H1 (cell line): ENCODE measurements at regions of chr20 and their contacts with region 1.

Region 1: GRCh38 chr20:63641792-63642544 is 11.3 kb downstream of the STMN3 start:
- DNase-seq: peak in 1 of 2 experiments; percentile 97
- H3K4me3 ChIP-seq: peak overlapping the region; percentile 34 to 67 (median 49)
- H3K27ac ChIP-seq: peak overlapping the region; percentile 28; the same call in 1 of the 2 replicates
- H3K4me1 ChIP-seq: peaks cover 0 to 16% (median 1%) of the 10 kb centered on the region in 4 experiments; a peak in 3 of 7 replicates
- H3K27me3 ChIP-seq: no peaks in the 10 kb centered on the region; a peak in 1 of 7 replicates
- CTCF ChIP-seq: peak; percentile 40 to 63 (median 55)
- EP300 ChIP-seq: no peak
- POLR2A ChIP-seq: peak in 1 of 2 experiments; percentile 63; a peak in 1 of 3 replicates
- RAD21 ChIP-seq: peak; percentile 51 to 52

Region 2: DNA sequence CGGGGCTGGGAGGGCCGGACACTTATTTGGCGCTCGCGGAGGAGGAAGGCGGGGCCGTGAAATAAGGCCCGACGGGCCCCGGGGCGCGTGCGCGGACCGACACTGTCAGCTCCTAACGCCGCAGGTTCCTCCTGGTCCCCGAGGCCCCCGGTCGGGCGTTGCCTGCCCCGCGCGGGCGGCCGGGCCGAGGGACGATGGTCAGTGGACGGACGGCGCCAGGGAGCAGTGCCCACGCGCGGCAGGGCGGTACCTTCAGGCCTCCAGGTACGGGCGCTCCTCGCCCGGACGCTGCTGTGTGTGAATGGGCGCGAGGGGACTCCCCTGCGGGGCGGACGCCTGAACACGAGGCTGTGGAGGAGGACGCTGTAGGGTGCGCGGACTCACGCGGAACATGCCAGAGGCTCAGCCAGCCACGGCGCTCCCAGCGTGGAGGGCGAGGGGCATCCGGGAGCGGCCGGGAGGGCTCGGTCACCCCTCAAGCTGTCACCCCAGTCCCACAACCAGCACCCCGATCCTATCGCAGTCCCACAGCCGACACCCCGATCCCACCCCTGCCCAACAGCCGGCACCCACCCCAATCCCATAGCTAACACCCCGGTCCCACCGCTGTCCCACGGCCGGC is 14.7 kb before region 1 on chr20:
- CTCF ChIA-PET with region 1: interaction called, 28 read pairs
- POLR2A ChIA-PET with region 1: interaction called, 12 read pairs
- DNase-seq: peak; percentile 54 to 95
- H3K4me3 ChIP-seq: peak overlapping the region; percentile 75 to 99 (median 92)
- H3K27ac ChIP-seq: peak overlapping the region; percentile 68; the same call in 1 of the 2 replicates
- H3K4me1 ChIP-seq: peaks cover 0 to 3% (median under 1%) of the 10 kb centered on the region in 4 experiments; a peak in 3 of 7 replicates
- H3K27me3 ChIP-seq: no peaks in the 10 kb centered on the region
- CTCF ChIP-seq: no peak
- EP300 ChIP-seq: no peak
- POLR2A ChIP-seq: no peak
- RAD21 ChIP-seq: no peak

Region 3: GRCh38 chr20:63652168-63653077 is 10.5 kb after region 1 on chr20:
- CTCF ChIA-PET with region 1: interaction called, 11 read pairs
- POLR2A ChIA-PET with region 1: interaction called, 15 read pairs
- DNase-seq: peak in 1 of 2 experiments; percentile 82
- H3K4me3 ChIP-seq: peak overlapping the region; percentile 34 to 85 (median 49)
- H3K27ac ChIP-seq: no peak overlapping the region
- H3K4me1 ChIP-seq: peaks cover 0 to 17% (median 13%) of the 10 kb centered on the region in 4 experiments; a peak in 6 of 7 replicates
- H3K27me3 ChIP-seq: peaks cover 0 to 2% (median 0%) of the 10 kb centered on the region in 4 experiments; a peak in 2 of 7 replicates
- CTCF ChIP-seq: no peak
- EP300 ChIP-seq: no peak
- POLR2A ChIP-seq: no peak
- RAD21 ChIP-seq: no peak

Region 4: DNA sequence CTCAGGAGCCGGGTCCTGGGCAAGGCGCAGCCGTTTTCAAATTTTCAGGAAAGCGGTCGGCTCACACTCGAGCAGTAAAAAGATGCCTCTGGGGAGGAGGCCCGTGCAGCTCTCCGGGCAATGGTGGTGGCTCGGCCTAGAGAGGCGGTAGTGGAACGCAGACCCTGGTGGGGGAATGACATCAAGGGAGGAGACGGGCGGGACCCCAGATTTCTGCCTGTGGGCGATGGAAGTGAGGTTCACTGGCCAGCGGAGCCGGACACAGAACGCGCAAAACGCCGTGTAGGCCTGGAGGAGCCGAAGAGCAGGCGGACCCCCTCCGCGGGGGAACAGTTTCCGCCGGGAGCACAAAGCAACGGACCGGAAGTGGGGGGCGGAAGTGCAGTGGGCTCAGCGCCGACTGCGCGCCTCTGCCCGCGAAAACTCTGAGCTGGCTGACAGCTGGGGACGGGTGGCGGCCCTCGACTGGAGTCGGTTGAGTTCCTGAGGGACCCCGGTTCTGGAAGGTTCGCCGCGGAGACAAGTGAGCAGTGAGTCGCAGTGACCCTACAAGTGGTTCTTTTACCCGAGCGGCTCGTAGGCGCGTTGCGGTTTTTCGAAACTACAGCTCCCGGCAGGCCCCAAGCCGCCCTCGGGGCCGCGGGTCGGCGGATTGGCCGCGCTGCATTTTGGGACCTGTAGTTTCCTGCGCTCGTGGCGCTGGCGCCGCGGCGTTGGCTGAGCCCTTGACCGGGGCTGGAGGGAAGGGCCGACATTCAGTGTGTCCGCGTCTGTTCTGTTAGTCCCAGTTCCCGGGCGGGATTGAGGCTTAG is 16.2 kb after region 1 on chr20 and contains the start of gene RTEL1:
- CTCF ChIA-PET with region 1: interaction called, 6 read pairs
- POLR2A ChIA-PET with region 1: interaction called, 15 read pairs
- DNase-seq: peak in 1 of 2 experiments; percentile 96
- H3K4me3 ChIP-seq: peak within 1 kb of the TSS; percentile 75 to 96 (median 84)
- H3K27ac ChIP-seq: no peak within 1 kb of the TSS; the same call in 1 of the 2 replicates
- H3K4me1 ChIP-seq: peaks cover 0 to 16% (median 14%) of the 10 kb centered on the region in 4 experiments; a peak in 6 of 7 replicates
- H3K27me3 ChIP-seq: no peaks in the 10 kb centered on the region
- CTCF ChIP-seq: peak in 1 of 3 experiments; percentile 12; a peak in 1 of 4 replicates
- EP300 ChIP-seq: no peak
- POLR2A ChIP-seq: peak in 1 of 2 experiments; percentile 47; a peak in 2 of 3 replicates
- RAD21 ChIP-seq: no peak
- total RNA-seq, gene RTEL1: 37.1 and 37.8 TPM in 2 replicates